ENCODE measurements at regions of chr1 and their contacts with region 1.

Region 1: DNA sequence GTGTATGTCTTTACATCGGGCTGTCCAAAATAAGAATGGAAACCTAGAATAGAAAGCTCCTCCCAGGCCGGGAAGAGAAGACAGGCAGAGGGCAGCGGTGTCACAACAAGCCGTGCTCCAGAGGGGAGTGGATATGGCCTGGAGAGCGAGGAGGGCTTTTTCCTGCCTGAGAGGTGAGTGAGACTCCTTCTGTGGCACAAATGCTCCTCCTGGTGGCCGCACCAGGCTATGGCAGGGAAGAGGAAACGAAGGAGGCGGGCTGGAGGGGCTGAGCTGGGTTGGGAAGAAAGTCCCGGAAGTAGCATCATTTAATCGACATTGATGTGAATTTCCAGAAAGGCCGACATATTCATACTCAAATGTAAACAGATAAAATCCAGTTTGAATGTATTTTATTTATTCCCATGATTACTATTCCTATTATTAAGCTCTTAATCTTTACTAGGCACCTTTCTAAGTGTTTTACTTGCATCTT is 54.7 kb downstream of the MEF2D start:
- DNase-seq: peak; percentile 85
- H3K4me3 Mint-ChIP-seq: no peak overlapping the region
- H3K27ac Mint-ChIP-seq: peak overlapping the region; percentile 38
- H3K4me1 Mint-ChIP-seq: peaks cover 6% of the 10 kb centered on the region
- H3K27me3 Mint-ChIP-seq: peaks cover 75% of the 10 kb centered on the region

Region 2: DNA sequence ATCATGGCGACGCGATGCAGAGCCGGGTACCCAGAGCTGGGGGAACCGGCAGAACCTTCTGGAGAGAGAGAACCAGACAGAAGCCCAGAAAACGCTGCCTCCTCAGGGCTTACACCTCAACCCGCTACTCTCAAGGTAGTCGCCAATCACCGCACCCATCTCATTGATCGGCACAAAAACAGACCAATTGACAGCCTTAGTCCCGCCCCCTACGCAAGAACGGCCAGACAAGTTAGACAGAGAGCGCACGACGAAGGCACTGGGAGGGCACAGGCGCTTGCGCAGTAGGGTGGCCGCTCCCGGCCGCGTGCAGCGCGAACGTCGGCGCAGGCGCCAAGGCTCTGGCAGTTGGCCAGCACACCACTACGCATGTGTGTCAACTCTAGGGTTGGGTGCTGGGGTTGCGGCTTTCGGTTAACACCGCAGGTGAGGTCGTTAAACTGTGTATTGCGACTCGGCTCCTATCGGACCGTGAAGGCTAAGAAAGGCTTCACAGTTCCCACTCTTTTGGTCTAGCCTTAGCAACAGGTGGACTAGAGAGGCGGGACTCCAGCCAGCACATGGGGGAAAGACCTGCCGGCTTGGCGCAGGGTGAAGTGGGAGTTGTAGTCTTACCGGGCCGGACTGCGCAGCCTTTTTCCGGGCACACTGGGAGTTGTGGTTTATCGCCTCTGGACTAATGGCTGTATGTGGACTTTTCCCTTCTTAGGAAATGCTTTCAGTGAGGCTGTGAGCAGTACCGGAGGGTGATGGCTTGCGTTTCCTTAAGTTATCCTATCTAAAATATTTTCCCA is 107.4 kb before region 1 on chr1 and contains the starts of genes CCT3 and TSACC:
- CTCF ChIA-PET with region 1: no interaction called
- DNase-seq: peak; percentile 99
- H3K4me3 Mint-ChIP-seq: peak within 1 kb of the TSS; percentile 92
- H3K27ac Mint-ChIP-seq: peak within 1 kb of the TSS; percentile 98
- H3K4me1 Mint-ChIP-seq: peaks cover 39% of the 10 kb centered on the region
- H3K27me3 Mint-ChIP-seq: peaks cover 5% of the 10 kb centered on the region

Region 3: DNA sequence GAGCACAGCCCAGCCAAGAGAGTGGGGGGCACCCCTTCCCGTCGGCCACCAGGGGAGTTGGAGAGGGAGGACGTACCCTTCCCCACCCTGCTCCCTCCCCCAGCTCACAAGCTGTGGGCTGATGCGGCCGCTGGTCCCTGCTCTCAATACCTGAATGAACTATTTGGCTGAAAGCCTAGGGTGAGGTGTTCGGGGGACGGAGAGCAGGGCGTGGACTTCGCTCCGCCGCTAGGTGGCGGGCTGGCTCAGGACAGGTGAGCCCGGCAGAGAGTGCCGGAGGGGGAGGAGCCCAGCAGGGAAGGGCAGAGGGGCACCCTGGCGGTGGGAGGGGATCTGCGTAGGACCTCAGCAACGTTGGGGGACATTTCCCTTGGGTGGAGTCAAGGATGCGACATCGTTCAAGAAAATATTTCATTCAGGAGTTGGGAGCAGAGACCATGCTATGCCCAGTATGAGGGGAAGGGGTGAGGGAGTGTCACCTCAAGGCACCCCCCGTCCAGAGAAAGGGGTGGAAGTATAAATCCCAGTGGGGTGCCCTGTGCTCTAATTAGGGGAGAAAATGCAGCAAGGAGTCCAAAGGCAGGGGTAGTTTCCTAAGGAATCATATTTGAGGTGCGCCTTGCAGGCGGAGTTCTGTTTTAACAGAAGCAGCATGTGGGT is 88.8 kb before region 1 on chr1:
- CTCF ChIA-PET with region 1: interaction called, 12 read pairs
- DNase-seq: peak; percentile 67
- H3K4me3 Mint-ChIP-seq: no peak overlapping the region
- H3K27ac Mint-ChIP-seq: no peak overlapping the region
- H3K4me1 Mint-ChIP-seq: peaks cover 7% of the 10 kb centered on the region
- H3K27me3 Mint-ChIP-seq: peaks cover 60% of the 10 kb centered on the region

Region 4: DNA sequence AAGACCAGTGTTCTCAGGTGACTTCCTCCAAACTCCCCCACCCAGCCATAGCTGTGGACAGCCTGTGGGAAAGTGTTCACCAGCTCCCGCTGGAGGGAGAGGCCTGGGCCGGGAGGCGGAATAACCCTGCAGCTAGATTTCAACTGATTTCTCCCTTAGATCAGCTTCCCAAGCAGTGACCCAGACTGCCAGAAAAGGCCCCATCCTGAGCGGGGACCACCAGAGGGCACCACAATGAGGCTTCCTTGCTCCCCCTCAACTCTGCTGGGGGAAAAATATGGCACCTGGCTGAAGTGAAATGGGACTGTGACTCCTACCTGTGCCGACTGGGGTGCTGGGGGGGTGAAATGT is 26.0 kb before region 1 on chr1:
- CTCF ChIA-PET with region 1: interaction called, 10 read pairs
- DNase-seq: peak; percentile 35
- H3K4me3 Mint-ChIP-seq: peak overlapping the region; percentile 71
- H3K27ac Mint-ChIP-seq: no peak overlapping the region
- H3K4me1 Mint-ChIP-seq: peaks cover 17% of the 10 kb centered on the region
- H3K27me3 Mint-ChIP-seq: peaks cover 95% of the 10 kb centered on the region

Region 5: GRCh38 chr1:156456622-156457465 is 11.0 kb after region 1 on chr1:
- CTCF ChIA-PET with region 1: interaction called, 10 read pairs
- DNase-seq: peak; percentile 97
- H3K4me3 Mint-ChIP-seq: peak overlapping the region; percentile 77
- H3K27ac Mint-ChIP-seq: peak overlapping the region; percentile 97
- H3K4me1 Mint-ChIP-seq: peaks cover 18% of the 10 kb centered on the region
- H3K27me3 Mint-ChIP-seq: peaks cover 9% of the 10 kb centered on the region

Region 6: DNA sequence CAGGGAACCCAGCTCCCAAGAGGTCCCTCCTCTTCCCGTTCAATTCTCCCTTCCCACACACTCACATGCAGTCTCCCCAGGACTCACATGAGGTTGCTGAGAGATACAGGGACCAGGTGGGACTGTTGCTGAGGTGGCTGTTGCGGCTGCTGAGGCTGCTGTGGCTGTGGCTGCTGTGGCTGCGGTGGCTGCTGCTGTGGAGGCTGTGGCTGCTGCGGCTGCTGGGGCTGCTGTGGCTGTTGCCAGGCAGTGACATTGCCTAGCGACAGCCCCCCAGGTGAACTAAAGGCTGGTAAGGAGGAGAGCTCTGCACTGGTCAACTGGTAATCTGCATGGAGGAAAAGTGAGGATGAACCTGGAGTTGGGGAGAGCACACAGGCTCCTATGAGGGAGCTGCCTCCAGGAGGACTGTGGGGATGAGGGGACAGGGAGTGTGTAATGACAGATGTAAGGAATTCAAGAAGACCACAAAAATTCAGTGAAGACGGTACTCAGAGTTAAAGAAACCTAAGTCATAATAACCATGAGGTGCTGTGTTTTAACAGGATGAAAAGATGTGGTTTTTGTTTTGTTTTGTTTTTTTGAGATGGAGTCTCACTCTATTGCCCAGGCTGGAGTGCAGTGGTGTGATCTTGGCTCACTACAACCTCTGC is 23.0 kb after region 1 on chr1:
- CTCF ChIA-PET with region 1: no interaction called
- DNase-seq: no peak
- H3K4me3 Mint-ChIP-seq: no peak overlapping the region
- H3K27ac Mint-ChIP-seq: no peak overlapping the region
- H3K4me1 Mint-ChIP-seq: peaks cover 13% of the 10 kb centered on the region
- H3K27me3 Mint-ChIP-seq: no peaks in the 10 kb centered on the region

Region 7: GRCh38 chr1:156608036-156608674 is 162.3 kb after region 1 on chr1:
- CTCF ChIA-PET with region 1: interaction called, 12 read pairs
- DNase-seq: peak; percentile 78
- H3K4me3 Mint-ChIP-seq: no peak overlapping the region
- H3K27ac Mint-ChIP-seq: no peak overlapping the region
- H3K4me1 Mint-ChIP-seq: peaks cover 12% of the 10 kb centered on the region
- H3K27me3 Mint-ChIP-seq: peaks cover 47% of the 10 kb centered on the region

Measured in activated naive CD4-positive, alpha-beta T cell treated with anti-CD3 and anti-CD28 coated beads, Interleukin-2, amount 10 ng/mL, durations not matched to agents 7 days and 5 days (primary cell).